ENCODE measurements at regions of chr10 and their contacts with region 1.

Region 1: GRCh38 chr10:79438021-79438698 is 7.3 kb downstream of the ZCCHC24 start:
- DNase-seq: no peak
- H3K4me3 ChIP-seq: no peak overlapping the region
- H3K27ac ChIP-seq: peak overlapping the region; percentile 83 to 93
- H3K4me1 ChIP-seq: peaks cover 23 to 72% of the 10 kb centered on the region in 2 donors
- H3K27me3 ChIP-seq: no peaks in the 10 kb centered on the region
- CTCF ChIP-seq: peak in 2 of 3 experiments; percentile 24 to 33

Region 2: GRCh38 chr10:79463578-79464496 is 25.7 kb after region 1 on chr10:
- intact Hi-C with region 1: loop called (anchors 2 kb)
- DNase-seq: no peak
- H3K4me3 ChIP-seq: no peak overlapping the region
- H3K27ac ChIP-seq: no peak overlapping the region
- H3K4me1 ChIP-seq: no peaks in the 10 kb centered on the region
- H3K27me3 ChIP-seq: no peaks in the 10 kb centered on the region
- CTCF ChIP-seq: no peak

Measured in ascending aorta (tissue), 2 donors.